ENCODE measurements at regions of chr1 and their contacts with region 1.

Region 1: DNA sequence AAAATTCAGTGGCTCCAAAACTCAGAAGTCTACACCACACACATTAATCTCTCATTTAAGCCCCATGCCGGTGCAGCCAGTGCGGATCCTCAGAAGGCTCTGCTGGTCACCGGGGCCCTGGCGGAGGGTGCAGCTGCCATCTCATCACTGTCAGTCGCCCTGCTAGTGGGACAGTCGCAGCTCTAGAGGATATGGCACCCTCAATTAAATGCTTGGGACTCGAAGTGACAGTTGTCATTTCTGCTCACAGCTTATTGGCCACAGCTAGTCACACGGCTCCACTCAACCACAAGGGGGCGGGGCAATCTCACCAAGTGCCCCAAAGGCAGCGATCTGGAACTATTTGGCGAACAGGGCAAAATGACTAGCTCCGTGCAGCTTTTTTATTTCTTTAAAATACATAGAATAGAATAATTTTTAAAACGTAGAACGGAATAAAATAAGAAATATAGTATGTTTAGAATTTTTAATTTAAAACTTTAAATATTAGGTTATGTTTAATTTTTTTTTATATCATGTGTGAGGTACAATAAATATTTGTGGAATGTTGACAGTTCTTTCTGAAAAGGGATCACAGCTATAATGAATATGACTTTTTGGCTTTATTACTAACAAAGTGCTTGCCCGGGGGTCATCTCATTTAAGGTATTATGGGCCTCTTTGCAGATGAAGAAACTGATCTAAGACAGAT is 8.0 kb upstream of the MAN1C1 start:
- DNase-seq: peak; percentile 82 to 93 (median 86)
- ATAC-seq: peak; percentile 99
- H3K4me3 ChIP-seq: peak overlapping the region; percentile 28
- H3K27ac ChIP-seq: no peak overlapping the region
- H3K4me1 ChIP-seq: peaks cover 2 to 3% of the 10 kb centered on the region in 2 experiments; a peak in 2 of 5 replicates
- H3K27me3 ChIP-seq: peaks cover 10 to 28% of the 10 kb centered on the region in 2 experiments
- CTCF ChIP-seq: peak; percentile 76 to 82 (median 79)
- EP300 ChIP-seq: no peak
- POLR2A ChIP-seq: no peak
- RAD21 ChIP-seq: peak; percentile 87 to 88

Region 2: DNA sequence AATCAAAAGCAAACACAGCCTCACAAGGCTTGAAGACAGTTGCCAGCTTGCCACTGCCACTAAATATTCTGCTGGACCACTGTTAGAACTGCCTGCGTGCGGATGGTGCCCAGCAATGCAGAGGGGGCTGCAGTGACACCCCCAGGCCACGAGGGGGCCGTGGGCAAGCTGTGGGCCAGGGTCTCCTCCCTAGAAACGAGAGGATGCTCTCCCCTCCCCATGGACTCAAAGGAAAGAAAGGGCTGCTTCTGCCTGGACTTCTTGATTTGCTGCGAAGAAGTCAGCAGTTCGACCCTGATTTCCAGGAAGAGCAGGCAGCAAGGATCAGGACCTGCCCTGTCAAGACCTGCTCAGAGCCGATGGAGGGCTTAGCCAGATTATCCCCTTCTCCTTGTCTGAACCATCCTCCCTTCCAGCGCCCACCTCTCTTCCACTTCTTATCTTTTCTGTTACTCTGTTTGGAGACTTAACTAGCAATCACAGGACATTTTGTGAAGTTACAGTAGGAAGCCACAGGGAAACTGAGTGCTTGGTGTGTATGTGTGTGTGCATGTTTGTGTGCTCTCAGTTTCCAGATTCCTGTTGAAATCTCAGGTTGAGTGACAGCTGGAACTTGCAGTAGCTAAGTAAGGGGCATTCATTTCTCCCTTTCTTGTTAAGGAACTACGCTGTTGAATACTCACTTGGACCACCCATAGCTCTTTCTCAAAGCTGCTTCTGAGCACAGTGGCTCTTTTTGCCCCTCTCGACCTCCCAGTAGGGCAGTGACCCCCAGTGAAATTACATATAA is 10.7 kb after region 1 on chr1:
- CTCF ChIA-PET with region 1: no interaction called
- POLR2A ChIA-PET with region 1: no interaction called
- in situ Hi-C with region 1: no loop called
- intact Hi-C with region 1: no loop called
- DNase-seq: peak; percentile 44 to 64 (median 60)
- ATAC-seq: peak; percentile 43
- H3K4me3 ChIP-seq: no peak overlapping the region
- H3K27ac ChIP-seq: no peak overlapping the region
- H3K4me1 ChIP-seq: peaks cover 0 to 26% of the 10 kb centered on the region in 2 experiments; a peak in 2 of 5 replicates
- H3K27me3 ChIP-seq: peaks cover 56 to 70% of the 10 kb centered on the region in 2 experiments
- CTCF ChIP-seq: peak; percentile 62 to 84 (median 72)
- EP300 ChIP-seq: no peak
- POLR2A ChIP-seq: no peak
- RAD21 ChIP-seq: peak; percentile 38 to 64

Region 3: GRCh38 chr1:25695090-25695770 is 86.6 kb after region 1 on chr1:
- CTCF ChIA-PET with region 1: interaction called, 5 read pairs
- POLR2A ChIA-PET with region 1: no interaction called
- in situ Hi-C with region 1: no loop called
- intact Hi-C with region 1: loop called (anchors 2 kb)
- DNase-seq: peak; percentile 37 to 66 (median 48)
- ATAC-seq: peak; percentile 88
- H3K4me3 ChIP-seq: no peak overlapping the region
- H3K27ac ChIP-seq: no peak overlapping the region
- H3K4me1 ChIP-seq: peaks cover 4 to 7% of the 10 kb centered on the region in 2 experiments; a peak in 4 of 5 replicates
- H3K27me3 ChIP-seq: peaks cover 31 to 88% of the 10 kb centered on the region in 2 experiments
- CTCF ChIP-seq: peak; percentile 28 to 53 (median 51); a peak in 5 of 6 replicates
- EP300 ChIP-seq: peak; percentile 10; the same call in 1 of the 2 replicates
- POLR2A ChIP-seq: no peak
- RAD21 ChIP-seq: peak; percentile 54 to 72

Region 4: GRCh38 chr1:25727635-25728330 is 119.2 kb after region 1 on chr1:
- CTCF ChIA-PET with region 1: no interaction called
- POLR2A ChIA-PET with region 1: no interaction called
- in situ Hi-C with region 1: no loop called
- intact Hi-C with region 1: no loop called
- DNase-seq: peak in 2 of 4 experiments; percentile 33 to 38
- ATAC-seq: peak; percentile 68
- H3K4me3 ChIP-seq: no peak overlapping the region
- H3K27ac ChIP-seq: no peak overlapping the region
- H3K4me1 ChIP-seq: peaks cover 0 to 9% of the 10 kb centered on the region in 2 experiments; a peak in 4 of 5 replicates
- H3K27me3 ChIP-seq: peaks cover 46 to 81% of the 10 kb centered on the region in 2 experiments
- CTCF ChIP-seq: no peak
- EP300 ChIP-seq: no peak
- POLR2A ChIP-seq: no peak
- RAD21 ChIP-seq: no peak

Region 5: DNA sequence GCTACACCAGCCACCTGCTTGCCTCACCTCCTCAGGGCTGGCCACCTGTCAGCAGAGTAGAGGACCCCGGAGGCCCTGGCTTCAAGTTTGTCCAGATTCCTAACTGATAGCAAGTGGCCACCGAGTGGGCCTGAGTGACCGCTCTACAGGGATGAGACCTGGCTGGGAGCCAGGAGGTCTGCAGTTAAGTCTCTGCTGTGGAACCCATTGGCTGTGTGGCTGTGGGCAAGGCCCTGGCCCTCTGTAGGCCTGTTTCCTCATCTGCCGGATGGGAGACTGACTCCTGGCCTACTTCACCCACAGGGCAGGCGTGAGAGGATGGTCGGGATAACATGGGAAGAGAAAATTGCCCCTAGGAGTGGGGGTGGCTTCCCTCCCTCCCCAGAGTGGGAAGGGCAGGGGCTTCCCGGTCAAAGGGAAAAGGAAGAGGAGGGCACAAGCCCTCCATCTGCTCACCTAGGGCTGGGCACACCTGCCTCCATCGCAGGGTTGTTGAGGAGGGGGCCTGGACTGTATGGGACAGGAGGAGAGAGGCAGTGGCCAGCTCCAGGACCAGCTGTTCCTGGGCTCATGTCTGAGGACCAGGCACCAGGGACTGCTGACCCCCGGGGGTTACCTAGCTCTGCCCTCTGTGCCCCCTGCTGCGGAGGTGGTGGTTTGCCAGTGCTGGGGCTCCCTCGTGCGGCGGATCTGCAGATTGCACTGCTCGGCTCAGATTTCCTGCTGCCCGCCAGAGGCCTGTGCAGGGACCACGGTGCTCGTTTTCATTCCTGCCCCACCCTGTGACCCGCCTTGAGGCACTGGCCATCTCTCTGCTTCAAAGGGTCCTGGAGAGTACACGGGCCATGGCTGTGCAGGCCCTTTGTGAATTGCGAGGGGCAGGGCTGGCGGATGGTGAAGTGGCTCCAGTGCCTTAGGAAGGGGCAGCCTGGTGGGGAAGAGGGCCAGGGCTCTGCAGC is 202.0 kb after region 1 on chr1:
- CTCF ChIA-PET with region 1: interaction called, 14 read pairs
- POLR2A ChIA-PET with region 1: interaction called, 3 read pairs
- in situ Hi-C with region 1: no loop called
- intact Hi-C with region 1: loop called (anchors 2 kb)
- DNase-seq: peak; percentile 80 to 88 (median 84)
- ATAC-seq: peak; percentile 88
- H3K4me3 ChIP-seq: no peak overlapping the region
- H3K27ac ChIP-seq: no peak overlapping the region
- H3K4me1 ChIP-seq: peaks cover 2 to 50% of the 10 kb centered on the region in 2 experiments; a peak in 3 of 5 replicates
- H3K27me3 ChIP-seq: no peaks in the 10 kb centered on the region
- CTCF ChIP-seq: peak; percentile 95 to 97 (median 96)
- EP300 ChIP-seq: no peak
- POLR2A ChIP-seq: no peak
- RAD21 ChIP-seq: peak; percentile 93 to 98